ENCODE measurements at regions of chr4 and their contacts with region 1.

Region 1: GRCh38 chr4:112938461-112939058 is 110.9 kb upstream of the ANK2 start:
- DNase-seq: peak in 1 of 2 experiments; percentile 73
- H3K4me3 ChIP-seq: no peak overlapping the region
- H3K4me1 ChIP-seq: peaks cover 29% of the 10 kb centered on the region
- H3K27me3 ChIP-seq: no peaks in the 10 kb centered on the region

Region 2: GRCh38 chr4:112253382-112254000 is 685.1 kb before region 1 on chr4:
- in situ Hi-C with region 1: no loop called
- DNase-seq: no peak
- H3K4me3 ChIP-seq: no peak overlapping the region
- H3K4me1 ChIP-seq: peaks cover 16% of the 10 kb centered on the region
- H3K27me3 ChIP-seq: no peaks in the 10 kb centered on the region

Region 3: DNA sequence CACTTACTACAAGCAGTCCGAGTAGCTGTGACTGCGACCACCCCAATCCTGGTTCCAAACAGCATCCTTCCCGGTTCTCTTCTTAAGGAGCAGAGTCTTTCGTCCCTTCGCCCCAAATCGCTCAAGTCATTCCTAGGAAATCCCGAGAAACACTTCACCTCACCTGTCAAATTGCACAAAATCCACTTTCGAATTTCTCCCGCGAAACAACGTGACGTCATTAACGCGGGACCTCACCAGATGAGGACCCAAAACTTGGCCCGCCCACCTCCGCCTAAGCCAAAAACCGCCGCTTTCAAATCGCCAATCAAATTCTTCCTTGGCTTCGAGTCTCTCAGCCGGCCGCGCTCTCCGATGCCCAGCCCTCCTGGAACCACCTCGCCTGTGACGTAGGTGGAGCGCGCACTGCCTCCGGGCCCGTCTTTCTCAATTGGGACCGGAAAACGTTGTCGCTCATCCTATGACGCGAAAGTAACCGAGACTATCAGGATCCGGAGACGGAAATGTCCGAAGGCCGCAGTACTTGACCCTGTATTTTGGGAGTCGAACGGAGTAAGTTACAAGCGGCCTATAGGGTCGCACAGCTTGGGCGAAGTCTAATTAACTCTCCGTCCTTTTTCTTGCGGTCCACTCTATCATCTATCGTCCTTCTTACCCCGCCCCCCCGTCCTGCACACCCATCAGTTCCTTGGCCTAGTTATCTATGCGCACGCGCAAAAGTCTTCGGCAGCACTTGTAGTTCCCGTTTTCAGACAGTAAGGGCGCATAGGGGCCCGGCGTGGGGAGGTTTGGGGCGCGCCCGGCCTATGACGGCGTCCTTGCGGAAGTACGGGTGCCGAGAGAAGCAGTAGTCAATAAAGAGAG is 301.6 kb before region 1 on chr4 and contains the starts of genes LARP7 and ZGRF1:
- in situ Hi-C with region 1: loop called (anchors 10 kb)
- DNase-seq: peak; percentile 98 to 99
- H3K4me3 ChIP-seq: peak within 1 kb of the TSS; percentile 64
- H3K4me1 ChIP-seq: peaks cover 10% of the 10 kb centered on the region
- H3K27me3 ChIP-seq: no peaks in the 10 kb centered on the region

Region 4: DNA sequence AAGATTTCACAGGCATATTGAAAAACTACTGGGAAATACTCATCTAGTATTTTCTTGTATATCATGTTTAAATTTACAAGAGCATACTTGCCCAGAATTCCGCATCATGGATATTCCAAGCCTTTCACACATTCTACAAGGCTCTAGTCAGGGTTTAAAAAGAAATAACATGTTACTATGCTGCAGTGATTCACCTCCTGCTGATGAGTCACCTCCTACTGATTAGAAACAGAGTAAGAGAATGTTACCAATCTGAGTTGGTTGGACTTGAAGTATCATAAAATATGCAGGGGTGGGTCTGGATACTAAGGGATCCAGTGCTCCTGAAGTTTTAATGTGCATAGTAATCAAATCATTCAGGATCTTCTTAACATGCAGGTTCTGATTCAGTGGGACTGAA is 81.1 kb before region 1 on chr4:
- in situ Hi-C with region 1: loop called (anchors 5 kb)
- DNase-seq: no peak
- H3K4me3 ChIP-seq: no peak overlapping the region
- H3K4me1 ChIP-seq: peaks cover 42% of the 10 kb centered on the region
- H3K27me3 ChIP-seq: no peaks in the 10 kb centered on the region

Measured in HAP-1 (cell line).